ENCODE measurements at regions of chr13 and their contacts with region 1.

Region 1: GRCh38 chr13:111216166-111216960 is 101.3 kb downstream of the ARHGEF7 start:
- DNase-seq: peak; percentile 56
- ATAC-seq: peak; percentile 68

Region 2: GRCh38 chr13:111066544-111066943 is 149.8 kb before region 1 on chr13:
- intact Hi-C with region 1: loop called (anchors 10 kb)
- DNase-seq: peak; percentile 54
- ATAC-seq: peak; percentile 71

Region 3: DNA sequence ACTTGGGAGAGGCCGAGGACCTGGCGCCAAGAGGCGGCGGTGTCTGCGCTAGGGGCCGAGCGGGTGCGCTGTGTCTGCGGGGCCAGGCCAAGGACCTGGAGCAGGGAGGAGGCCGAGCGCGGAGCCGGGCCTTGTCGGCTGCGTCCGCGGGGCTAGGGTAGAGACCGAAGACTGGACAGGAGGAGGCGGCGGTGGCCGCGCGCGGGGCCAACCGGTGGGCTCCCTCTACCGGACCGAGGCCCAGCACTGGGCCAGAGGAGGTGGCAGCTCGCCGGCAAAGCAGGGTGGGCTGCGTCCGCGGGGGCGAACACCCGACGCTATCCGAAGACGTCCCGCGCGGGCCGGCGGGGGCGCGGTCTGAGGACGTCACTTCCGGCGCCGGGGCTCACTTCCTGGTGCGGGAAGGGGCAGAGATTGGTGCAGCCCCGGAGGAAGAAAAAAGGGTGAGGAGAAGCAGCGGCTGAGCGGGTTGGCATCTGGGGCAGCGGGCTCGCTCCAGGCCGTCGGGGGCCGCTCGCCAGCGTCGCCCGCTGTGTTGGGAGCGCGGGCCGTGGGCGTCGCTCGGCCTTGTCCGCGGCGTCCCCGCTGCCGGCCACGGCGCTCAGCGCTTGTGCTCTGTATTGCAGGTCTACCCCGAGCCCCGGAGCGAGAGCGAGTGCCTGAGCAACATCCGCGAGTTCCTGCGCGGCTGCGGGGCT is 62.9 kb before region 1 on chr13:
- intact Hi-C with region 1: loop called (anchors 10 kb)
- DNase-seq: peak; percentile 95
- ATAC-seq: peak; percentile 99